MCF 10A (cell line): ENCODE measurements at regions of chr6 and their contacts with region 1.

Region 1: DNA sequence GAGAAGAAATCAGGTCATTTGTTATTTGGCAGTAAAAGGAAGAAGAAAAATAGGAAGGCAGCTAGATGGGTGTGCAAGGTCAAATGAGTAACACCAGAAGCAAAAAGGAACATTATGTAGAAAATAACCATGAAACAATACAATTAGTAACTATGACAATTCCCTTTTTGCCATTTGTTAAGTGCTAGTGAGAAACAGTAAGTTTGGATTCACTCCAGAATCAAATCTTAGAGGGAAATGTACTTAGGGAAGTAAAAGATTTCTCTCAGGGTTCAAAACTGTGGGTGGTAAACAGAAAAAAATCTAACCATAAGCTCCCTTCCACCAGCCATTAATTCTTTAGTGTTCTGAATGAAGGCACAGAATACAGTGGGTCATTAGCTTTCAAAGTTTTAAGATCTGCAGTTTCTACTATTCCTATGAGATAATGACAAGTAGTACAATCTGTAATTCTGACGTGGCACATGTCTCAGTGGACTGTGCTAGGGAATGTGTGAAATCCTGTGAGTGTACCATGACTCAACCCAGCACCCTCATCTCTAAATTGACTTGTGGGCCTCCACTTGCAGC is 17.1 kb downstream of the REPS1 start:
- DNase-seq: peak; percentile 89
- H3K4me3 Mint-ChIP-seq: peak overlapping the region; percentile 8
- H3K27ac Mint-ChIP-seq: peak overlapping the region; percentile 79
- H3K4me1 Mint-ChIP-seq: peaks cover 47% of the 10 kb centered on the region
- H3K27me3 Mint-ChIP-seq: no peaks in the 10 kb centered on the region
- CTCF ChIP-seq: no peak

Region 2: GRCh38 chr6:138957484-138957883 is 13.5 kb before region 1 on chr6:
- CTCF ChIA-PET with region 1: no interaction called
- POLR2A ChIA-PET with region 1: interaction called, 15 read pairs
- intact Hi-C with region 1: no loop called
- DNase-seq: no peak
- H3K4me3 Mint-ChIP-seq: no peak overlapping the region
- H3K27ac Mint-ChIP-seq: no peak overlapping the region
- H3K4me1 Mint-ChIP-seq: peaks cover 35% of the 10 kb centered on the region
- H3K27me3 Mint-ChIP-seq: no peaks in the 10 kb centered on the region
- CTCF ChIP-seq: no peak

Region 3: GRCh38 chr6:138981416-138981815 is 10.5 kb after region 1 on chr6:
- CTCF ChIA-PET with region 1: interaction called, 36 read pairs
- POLR2A ChIA-PET with region 1: interaction called, 57 read pairs
- intact Hi-C with region 1: no loop called
- DNase-seq: no peak
- H3K4me3 Mint-ChIP-seq: no peak overlapping the region
- H3K27ac Mint-ChIP-seq: no peak overlapping the region
- H3K4me1 Mint-ChIP-seq: peaks cover 22% of the 10 kb centered on the region
- H3K27me3 Mint-ChIP-seq: no peaks in the 10 kb centered on the region
- CTCF ChIP-seq: no peak